Thyroid gland (tissue), 4 donors: ENCODE measurements at regions of chr7 and their contacts with region 1.

Region 1: GRCh38 chr7:36967387-36967786 is 243.1 kb upstream of the AOAH start:
- DNase-seq: peak; percentile 46 to 61
- H3K4me3 ChIP-seq: no peak overlapping the region
- H3K27ac ChIP-seq: no peak overlapping the region
- H3K4me1 ChIP-seq: peaks cover 8 to 18% of the 10 kb centered on the region in 2 donors
- H3K27me3 ChIP-seq: no peaks in the 10 kb centered on the region
- CTCF ChIP-seq: peak; percentile 61 to 83 (median 70)
- POLR2A ChIP-seq: no peak

Region 2: GRCh38 chr7:36726806-36727503 is 240.4 kb before region 1 on chr7:
- intact Hi-C with region 1: no loop called
- DNase-seq: no peak
- H3K4me3 ChIP-seq: no peak overlapping the region
- H3K27ac ChIP-seq: no peak overlapping the region
- H3K4me1 ChIP-seq: no peaks in the 10 kb centered on the region
- H3K27me3 ChIP-seq: no peaks in the 10 kb centered on the region
- CTCF ChIP-seq: no peak
- POLR2A ChIP-seq: no peak

Region 3: DNA sequence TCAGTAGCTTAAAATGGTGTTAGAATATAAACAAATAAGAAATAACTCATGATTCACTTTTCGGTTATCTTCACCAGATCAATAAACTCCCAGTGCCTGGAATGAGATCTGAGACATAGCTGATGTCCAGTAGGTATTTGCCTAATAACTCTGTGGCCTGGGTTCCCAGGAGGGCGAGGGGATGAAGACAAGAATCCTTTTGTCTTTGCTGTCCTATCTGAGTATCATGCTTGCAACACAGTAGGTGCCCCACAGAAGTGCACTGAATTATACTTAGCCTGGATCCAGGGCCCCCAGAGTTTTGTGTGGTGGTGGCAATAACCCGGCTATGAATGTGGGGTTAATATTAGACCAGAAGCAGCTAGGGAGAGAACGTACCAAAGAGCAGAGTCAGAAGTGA is 107.0 kb after region 1 on chr7:
- intact Hi-C with region 1: no loop called
- DNase-seq: no peak
- H3K4me3 ChIP-seq: no peak overlapping the region
- H3K27ac ChIP-seq: no peak overlapping the region
- H3K4me1 ChIP-seq: no peaks in the 10 kb centered on the region
- H3K27me3 ChIP-seq: no peaks in the 10 kb centered on the region
- CTCF ChIP-seq: no peak
- POLR2A ChIP-seq: no peak

Region 4: DNA sequence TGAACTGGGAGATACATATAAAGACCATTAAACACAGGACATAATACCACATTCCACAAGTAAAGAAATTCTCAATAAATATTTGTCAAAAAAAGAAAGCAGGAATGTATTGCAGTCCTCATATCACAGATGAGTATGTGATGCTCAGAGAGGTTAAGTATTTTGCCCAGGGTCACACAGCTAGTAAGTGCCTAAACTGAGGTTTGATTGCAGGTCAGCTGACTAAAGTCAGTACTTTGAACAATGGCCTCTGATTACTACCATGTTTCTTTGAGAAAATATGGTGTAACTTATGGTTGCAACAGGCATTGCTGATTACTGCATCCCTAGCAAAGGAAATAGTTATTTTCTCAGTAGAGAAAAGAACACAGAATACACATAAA is 214.2 kb after region 1 on chr7:
- intact Hi-C with region 1: loop called (anchors 5 kb)
- DNase-seq: no peak
- H3K4me3 ChIP-seq: no peak overlapping the region
- H3K27ac ChIP-seq: peak overlapping the region in 2 of 3 donors; percentile 19 to 50
- H3K4me1 ChIP-seq: peaks cover 15 to 16% of the 10 kb centered on the region in 2 donors
- H3K27me3 ChIP-seq: no peaks in the 10 kb centered on the region
- CTCF ChIP-seq: no peak
- POLR2A ChIP-seq: no peak

Region 5: GRCh38 chr7:37201003-37201875 is 233.9 kb after region 1 on chr7:
- intact Hi-C with region 1: loop called (anchors 5 kb)
- DNase-seq: peak; percentile 81 to 86
- H3K4me3 ChIP-seq: no peak overlapping the region
- H3K27ac ChIP-seq: peak overlapping the region; percentile 13 to 75 (median 61)
- H3K4me1 ChIP-seq: peaks cover 18 to 32% of the 10 kb centered on the region in 2 donors
- H3K27me3 ChIP-seq: no peaks in the 10 kb centered on the region
- CTCF ChIP-seq: peak; percentile 75 to 87 (median 82)
- POLR2A ChIP-seq: no peak

Region 6: GRCh38 chr7:37230221-37230620 is 262.8 kb after region 1 on chr7:
- intact Hi-C with region 1: no loop called
- DNase-seq: peak; percentile 92 to 95
- H3K4me3 ChIP-seq: no peak overlapping the region
- H3K27ac ChIP-seq: peak overlapping the region; percentile 50 to 62 (median 61)
- H3K4me1 ChIP-seq: peaks cover 26 to 30% of the 10 kb centered on the region in 2 donors
- H3K27me3 ChIP-seq: no peaks in the 10 kb centered on the region
- CTCF ChIP-seq: no peak
- POLR2A ChIP-seq: peak in 1 of 2 donors; percentile 30

Region 7: GRCh38 chr7:37751096-37751495 is 783.7 kb after region 1 on chr7:
- intact Hi-C with region 1: no loop called
- DNase-seq: no peak
- H3K4me3 ChIP-seq: no peak overlapping the region
- H3K27ac ChIP-seq: no peak overlapping the region
- H3K4me1 ChIP-seq: no peaks in the 10 kb centered on the region
- H3K27me3 ChIP-seq: no peaks in the 10 kb centered on the region
- CTCF ChIP-seq: no peak
- POLR2A ChIP-seq: no peak